Mammary epithelial cell (primary cell): ENCODE measurements at regions of chr6 and their contacts with region 1.

Region 1: GRCh38 chr6:50785921-50786320 is 32.8 kb upstream of the TFAP2B start:
- DNase-seq: peak; percentile 88
- H3K4me3 ChIP-seq: no peak overlapping the region
- H3K27ac ChIP-seq: peak overlapping the region; percentile 62
- H3K4me1 ChIP-seq: peaks cover 24% of the 10 kb centered on the region
- H3K27me3 ChIP-seq: no peaks in the 10 kb centered on the region
- CTCF ChIP-seq: peak; percentile 13 to 20

Region 2: DNA sequence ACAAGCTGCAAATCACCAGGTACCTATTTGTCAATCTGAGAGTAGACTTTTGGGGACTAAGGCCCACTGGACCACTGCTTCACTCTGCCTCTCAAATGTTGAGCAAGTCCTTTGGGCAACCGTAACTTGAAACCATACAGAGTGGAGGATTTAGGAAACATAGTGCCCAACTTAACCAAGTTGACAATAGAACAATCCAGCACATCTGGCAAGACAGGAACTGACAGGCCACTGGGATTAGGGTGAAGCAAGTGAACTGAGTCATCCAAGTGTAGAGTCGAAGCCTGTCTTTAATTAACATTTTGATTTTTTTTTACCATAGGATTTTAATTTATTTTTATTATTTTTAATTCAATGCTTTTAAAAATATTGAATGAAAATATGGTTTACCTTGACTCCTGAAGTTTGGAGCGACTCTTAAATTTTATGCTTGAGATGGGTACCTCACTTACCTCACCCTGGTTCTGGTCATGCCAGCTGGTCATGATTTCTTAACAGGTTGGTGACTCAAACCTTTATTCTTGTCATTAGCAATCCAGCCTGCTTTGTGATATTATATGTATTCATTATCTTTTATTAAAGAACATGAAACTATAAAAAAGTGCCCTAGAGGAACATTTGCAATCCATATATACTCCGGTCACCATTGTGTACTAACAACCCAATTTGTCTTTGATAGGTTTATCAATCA is 424.1 kb before region 1 on chr6:
- CTCF ChIA-PET with region 1: no interaction called
- dilution Hi-C with region 1: no loop called
- in situ Hi-C with region 1: no loop called
- intact Hi-C with region 1: loop called (anchors 10 kb)
- DNase-seq: peak; percentile 83
- H3K4me3 ChIP-seq: no peak overlapping the region
- H3K27ac ChIP-seq: peak overlapping the region; percentile 75
- H3K4me1 ChIP-seq: peaks cover 23% of the 10 kb centered on the region
- H3K27me3 ChIP-seq: no peaks in the 10 kb centered on the region
- CTCF ChIP-seq: no peak

Region 3: DNA sequence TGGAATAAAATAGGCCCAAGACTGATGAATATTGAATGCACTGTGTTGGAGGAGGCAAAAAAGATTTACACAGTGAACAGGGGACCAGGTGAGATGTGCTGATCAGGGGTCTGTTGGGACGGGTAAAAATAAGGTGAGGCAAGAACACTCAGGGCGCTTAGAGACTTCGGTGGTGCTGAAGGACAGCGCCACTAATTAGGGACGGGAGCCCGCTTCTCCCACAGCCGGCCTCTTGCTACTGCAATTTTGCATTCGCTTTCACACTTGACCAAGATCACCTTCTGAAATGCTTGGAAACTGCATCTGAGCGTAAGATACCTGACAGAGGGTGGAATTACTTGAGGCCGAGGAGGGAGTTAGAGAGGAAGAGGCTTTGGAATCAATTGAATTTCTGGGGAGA is 65.3 kb before region 1 on chr6:
- CTCF ChIA-PET with region 1: no interaction called
- dilution Hi-C with region 1: no loop called
- in situ Hi-C with region 1: no loop called
- intact Hi-C with region 1: loop called (anchors 10 kb)
- DNase-seq: peak; percentile 22
- H3K4me3 ChIP-seq: no peak overlapping the region
- H3K27ac ChIP-seq: no peak overlapping the region
- H3K4me1 ChIP-seq: no peaks in the 10 kb centered on the region
- H3K27me3 ChIP-seq: peaks cover 58% of the 10 kb centered on the region
- CTCF ChIP-seq: no peak

Region 4: DNA sequence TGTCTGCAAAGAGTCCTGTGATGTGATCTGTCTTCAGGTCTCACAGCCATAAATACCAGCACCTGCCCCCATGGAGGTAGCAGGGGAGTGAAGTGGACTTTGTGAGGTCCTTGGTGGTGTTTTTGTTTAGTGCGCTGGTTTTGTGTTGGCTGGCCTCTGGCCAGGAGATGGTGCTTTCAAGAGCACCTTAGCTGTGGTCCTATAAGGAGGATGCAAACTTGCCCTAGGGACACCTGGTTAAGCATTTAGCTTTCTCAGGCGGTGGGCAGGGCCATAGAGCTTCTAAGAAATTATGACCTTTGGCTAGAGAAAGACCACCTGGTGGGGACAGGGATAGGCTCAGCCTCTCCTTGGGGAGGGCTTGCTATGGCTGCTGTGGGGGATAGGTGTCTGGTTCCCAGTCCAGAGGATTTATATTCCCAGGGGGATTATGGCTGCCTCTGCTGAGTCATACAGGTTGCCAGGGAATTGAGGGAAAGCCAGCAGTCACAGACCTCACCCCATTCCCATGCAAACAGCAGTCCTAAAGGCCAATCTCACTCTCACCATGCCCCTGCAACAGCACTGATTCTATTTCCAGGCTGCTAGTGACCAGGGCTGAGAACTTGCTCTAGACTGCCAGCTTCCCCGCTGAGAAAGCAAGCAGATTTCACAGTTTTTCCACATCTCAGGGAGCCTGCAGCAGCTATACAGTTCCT is 292.0 kb after region 1 on chr6:
- CTCF ChIA-PET with region 1: no interaction called
- dilution Hi-C with region 1: no loop called
- in situ Hi-C with region 1: no loop called
- intact Hi-C with region 1: no loop called
- DNase-seq: no peak
- H3K4me3 ChIP-seq: no peak overlapping the region
- H3K27ac ChIP-seq: no peak overlapping the region
- H3K4me1 ChIP-seq: no peaks in the 10 kb centered on the region
- H3K27me3 ChIP-seq: no peaks in the 10 kb centered on the region
- CTCF ChIP-seq: no peak